B cell (primary cell): ENCODE measurements at regions of chr6 and their contacts with region 1.

Region 1: DNA sequence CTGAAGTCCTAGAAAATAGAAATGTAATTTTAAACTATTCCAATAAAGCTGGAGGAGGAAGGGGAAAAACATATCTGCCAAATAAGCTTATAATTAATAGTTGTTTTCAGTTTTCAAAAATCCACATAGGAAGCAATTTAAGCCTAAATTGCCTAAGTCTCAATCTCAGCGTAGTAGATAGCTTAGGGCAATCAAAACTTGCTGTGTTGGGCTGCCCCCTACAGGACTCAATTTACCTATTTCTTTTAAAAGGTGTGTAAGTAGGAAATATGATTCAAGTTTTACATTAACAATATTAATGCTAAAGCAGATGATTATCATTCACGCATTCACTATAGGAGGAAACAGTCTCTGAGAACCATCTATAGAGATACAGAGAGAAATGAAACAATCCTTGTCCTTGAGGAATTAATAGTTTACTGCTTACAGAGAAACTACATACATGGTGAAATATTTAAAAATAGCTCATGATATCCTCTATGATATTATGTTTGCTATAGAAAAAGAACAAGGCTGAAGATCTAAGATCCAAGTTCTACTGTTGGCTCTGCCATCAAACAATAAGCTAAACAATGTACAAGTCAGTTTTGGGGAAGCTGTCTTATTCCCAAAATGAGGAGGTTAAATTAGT is 102.1 kb downstream of the ATG5 start:
- DNase-seq: peak; percentile 81
- ATAC-seq: peak; percentile 49
- H3K4me3 ChIP-seq: no peak overlapping the region
- H3K4me3 Mint-ChIP-seq: no peak overlapping the region
- H3K27ac ChIP-seq: no peak overlapping the region
- H3K27ac Mint-ChIP-seq: no peak overlapping the region
- H3K4me1 ChIP-seq: no peaks in the 10 kb centered on the region
- H3K4me1 Mint-ChIP-seq: peaks cover 4% of the 10 kb centered on the region
- H3K27me3 ChIP-seq: no peaks in the 10 kb centered on the region
- H3K27me3 Mint-ChIP-seq: no peaks in the 10 kb centered on the region
- CTCF ChIP-seq: peak; percentile 92

Region 2: DNA sequence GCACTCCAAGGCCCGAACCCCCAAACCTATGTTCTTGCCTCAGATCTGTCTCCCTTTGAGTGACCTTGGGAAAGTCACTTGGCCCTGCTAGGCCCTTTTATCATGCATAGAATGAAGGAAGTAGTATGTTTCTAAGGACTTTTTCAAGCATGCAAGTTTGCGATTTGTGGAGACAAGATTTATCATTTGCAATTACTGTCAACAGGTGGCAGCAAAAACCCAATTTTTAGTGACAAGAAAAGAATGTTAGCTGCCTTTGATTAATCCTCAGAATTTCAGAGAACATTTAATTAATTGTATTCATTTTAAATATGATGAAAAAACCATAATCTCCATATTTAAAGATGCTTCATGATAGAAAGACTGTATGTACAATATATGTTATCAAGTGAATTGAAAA is 792.2 kb before region 1 on chr6:
- CTCF ChIA-PET with region 1: interaction called, 72 read pairs
- POLR2A ChIA-PET with region 1: no interaction called
- intact Hi-C with region 1: loop called (anchors 1 kb)
- DNase-seq: peak; percentile 52
- ATAC-seq: no peak
- H3K4me3 ChIP-seq: no peak overlapping the region
- H3K4me3 Mint-ChIP-seq: no peak overlapping the region
- H3K27ac ChIP-seq: no peak overlapping the region
- H3K27ac Mint-ChIP-seq: no peak overlapping the region
- H3K4me1 ChIP-seq: no peaks in the 10 kb centered on the region
- H3K4me1 Mint-ChIP-seq: no peaks in the 10 kb centered on the region
- H3K27me3 ChIP-seq: peaks cover 0 to 7% (median 0%) of the 10 kb centered on the region in 4 experiments
- H3K27me3 Mint-ChIP-seq: peaks cover 8% of the 10 kb centered on the region
- CTCF ChIP-seq: peak; percentile 66

Region 3: GRCh38 chr6:105726907-105727655 is 496.3 kb before region 1 on chr6:
- CTCF ChIA-PET with region 1: interaction called, 73 read pairs
- POLR2A ChIA-PET with region 1: no interaction called
- intact Hi-C with region 1: no loop called
- DNase-seq: no peak
- ATAC-seq: no peak
- H3K4me3 ChIP-seq: no peak overlapping the region
- H3K4me3 Mint-ChIP-seq: no peak overlapping the region
- H3K27ac ChIP-seq: no peak overlapping the region
- H3K27ac Mint-ChIP-seq: no peak overlapping the region
- H3K4me1 ChIP-seq: no peaks in the 10 kb centered on the region
- H3K4me1 Mint-ChIP-seq: no peaks in the 10 kb centered on the region
- H3K27me3 ChIP-seq: no peaks in the 10 kb centered on the region
- H3K27me3 Mint-ChIP-seq: no peaks in the 10 kb centered on the region
- CTCF ChIP-seq: no peak

Region 4: DNA sequence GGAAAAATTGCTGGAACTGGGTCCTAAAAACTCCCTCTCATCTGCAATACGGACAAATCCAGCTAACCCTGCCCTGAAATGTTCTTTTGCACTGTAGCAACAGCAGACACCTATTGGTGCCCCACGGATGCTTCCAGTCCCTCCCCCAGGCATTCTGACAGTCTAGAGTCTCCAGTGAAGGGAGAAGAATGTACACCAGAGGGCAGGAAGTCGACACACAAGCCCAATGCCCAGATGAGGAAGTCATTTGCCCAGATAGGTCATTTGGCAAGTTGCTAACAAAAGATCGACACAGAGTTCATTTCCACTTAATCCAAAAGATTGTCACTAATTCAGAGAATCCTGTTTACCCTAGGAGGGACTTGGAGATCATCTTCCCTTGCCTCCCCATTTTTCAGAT is 430.3 kb before region 1 on chr6:
- CTCF ChIA-PET with region 1: interaction called, 18 read pairs
- POLR2A ChIA-PET with region 1: no interaction called
- intact Hi-C with region 1: loop called (anchors 1 kb)
- DNase-seq: peak; percentile 67
- ATAC-seq: peak; percentile 73
- H3K4me3 ChIP-seq: no peak overlapping the region
- H3K4me3 Mint-ChIP-seq: no peak overlapping the region
- H3K27ac ChIP-seq: no peak overlapping the region
- H3K27ac Mint-ChIP-seq: no peak overlapping the region
- H3K4me1 ChIP-seq: peaks cover 9 to 15% of the 10 kb centered on the region in 2 donors
- H3K4me1 Mint-ChIP-seq: peaks cover 22% of the 10 kb centered on the region
- H3K27me3 ChIP-seq: no peaks in the 10 kb centered on the region
- H3K27me3 Mint-ChIP-seq: no peaks in the 10 kb centered on the region
- CTCF ChIP-seq: peak; percentile 21

Region 5: DNA sequence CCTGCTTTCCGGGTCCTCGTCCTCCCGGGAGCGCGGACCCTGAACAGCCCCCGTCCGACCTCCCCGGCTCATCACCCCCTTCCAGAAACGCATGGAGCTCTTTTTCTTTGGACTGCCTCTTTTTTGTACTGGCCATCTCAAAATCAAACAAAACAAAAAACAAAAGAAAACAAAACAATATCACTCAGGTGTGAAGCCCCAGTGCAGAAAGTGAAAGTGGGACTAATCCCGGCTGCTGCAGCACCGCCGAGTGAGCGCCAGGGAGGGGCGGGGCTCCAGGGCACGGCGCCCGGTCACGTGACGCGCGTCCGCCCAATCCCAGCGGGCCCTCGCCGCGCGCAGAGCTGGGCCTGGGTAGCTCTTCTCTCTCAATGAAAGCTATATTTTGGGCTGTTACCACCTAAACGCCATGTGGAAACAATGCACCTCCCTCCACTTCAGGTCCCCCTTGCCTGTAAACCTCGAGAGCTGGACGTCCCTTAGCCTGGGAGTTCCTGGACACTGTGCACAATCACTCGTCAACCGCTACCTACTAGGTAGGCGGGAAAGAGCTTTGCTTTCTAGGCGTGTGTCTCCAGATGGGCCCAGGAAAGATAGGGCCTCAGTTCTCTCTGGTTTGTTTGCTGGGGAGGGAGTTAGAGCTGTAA is 231.0 kb before region 1 on chr6:
- CTCF ChIA-PET with region 1: interaction called, 37 read pairs
- POLR2A ChIA-PET with region 1: no interaction called
- intact Hi-C with region 1: loop called (anchors 1 kb)
- DNase-seq: peak; percentile 94
- ATAC-seq: peak; percentile 93
- H3K4me3 ChIP-seq: peak overlapping the region; percentile 81 to 96 (median 89)
- H3K4me3 Mint-ChIP-seq: peak overlapping the region; percentile 90
- H3K27ac ChIP-seq: peak overlapping the region; percentile 91
- H3K27ac Mint-ChIP-seq: peak overlapping the region; percentile 94
- H3K4me1 ChIP-seq: peaks cover 26 to 28% of the 10 kb centered on the region in 2 donors
- H3K4me1 Mint-ChIP-seq: peaks cover 26% of the 10 kb centered on the region
- H3K27me3 ChIP-seq: peaks cover 4 to 34% (median 22%) of the 10 kb centered on the region in 4 experiments
- H3K27me3 Mint-ChIP-seq: peaks cover 57% of the 10 kb centered on the region
- CTCF ChIP-seq: no peak

Region 6: GRCh38 chr6:106097411-106098231 is 125.8 kb before region 1 on chr6:
- CTCF ChIA-PET with region 1: interaction called, 34 read pairs
- POLR2A ChIA-PET with region 1: no interaction called
- intact Hi-C with region 1: no loop called
- DNase-seq: peak; percentile 82
- ATAC-seq: peak; percentile 74
- H3K4me3 ChIP-seq: peak overlapping the region; percentile 48 to 82 (median 71)
- H3K4me3 Mint-ChIP-seq: peak overlapping the region; percentile 98
- H3K27ac ChIP-seq: peak overlapping the region; percentile 66 to 88
- H3K27ac Mint-ChIP-seq: peak overlapping the region; percentile 96
- H3K4me1 ChIP-seq: peaks cover 20 to 31% of the 10 kb centered on the region in 2 donors
- H3K4me1 Mint-ChIP-seq: peaks cover 75% of the 10 kb centered on the region
- H3K27me3 ChIP-seq: no peaks in the 10 kb centered on the region
- H3K27me3 Mint-ChIP-seq: no peaks in the 10 kb centered on the region
- CTCF ChIP-seq: no peak

Region 7: GRCh38 chr6:106181664-106182418 is 41.6 kb before region 1 on chr6:
- CTCF ChIA-PET with region 1: interaction called, 11 read pairs
- POLR2A ChIA-PET with region 1: no interaction called
- intact Hi-C with region 1: no loop called
- DNase-seq: no peak
- ATAC-seq: no peak
- H3K4me3 ChIP-seq: no peak overlapping the region
- H3K4me3 Mint-ChIP-seq: no peak overlapping the region
- H3K27ac ChIP-seq: no peak overlapping the region
- H3K27ac Mint-ChIP-seq: no peak overlapping the region
- H3K4me1 ChIP-seq: peaks cover 3 to 4% of the 10 kb centered on the region in 2 donors
- H3K4me1 Mint-ChIP-seq: peaks cover 11% of the 10 kb centered on the region
- H3K27me3 ChIP-seq: no peaks in the 10 kb centered on the region
- H3K27me3 Mint-ChIP-seq: no peaks in the 10 kb centered on the region
- CTCF ChIP-seq: no peak